ENCODE measurements at regions of chr2 and their contacts with region 1.

Region 1: GRCh38 chr2:225797394-225797793 is 397.9 kb downstream of the NYAP2 start:
- DNase-seq: no peak
- H3K4me3 ChIP-seq: no peak overlapping the region
- H3K27ac ChIP-seq: no peak overlapping the region
- H3K4me1 ChIP-seq: no peaks in the 10 kb centered on the region
- H3K27me3 ChIP-seq: no peaks in the 10 kb centered on the region
- CTCF ChIP-seq: peak; percentile 13 to 51 (median 13)

Region 2: GRCh38 chr2:225668606-225669266 is 128.7 kb before region 1 on chr2:
- intact Hi-C with region 1: loop called (anchors 2 kb)
- DNase-seq: no peak
- H3K4me3 ChIP-seq: no peak overlapping the region
- H3K27ac ChIP-seq: no peak overlapping the region
- H3K4me1 ChIP-seq: no peaks in the 10 kb centered on the region
- H3K27me3 ChIP-seq: no peaks in the 10 kb centered on the region
- CTCF ChIP-seq: peak; percentile 14 to 60 (median 46)

Region 3: DNA sequence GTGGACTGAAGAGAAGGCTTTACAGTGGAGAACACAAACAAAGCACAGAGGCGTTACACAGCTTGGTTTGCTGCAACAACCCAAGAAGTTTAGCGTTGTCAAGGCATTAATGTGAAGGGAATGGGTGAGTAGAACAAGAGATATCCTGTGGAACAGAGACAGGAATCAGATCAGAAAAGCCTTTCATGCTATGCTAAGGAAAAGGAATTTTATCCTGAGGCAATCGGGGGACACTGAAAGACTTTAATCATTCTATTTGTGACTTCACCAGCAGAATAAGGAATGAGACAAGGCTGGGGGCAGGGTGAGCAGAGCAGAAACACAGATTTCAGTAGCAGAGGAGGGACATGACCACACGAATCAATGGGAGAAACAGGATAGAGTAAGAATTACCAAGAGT is 401.6 kb after region 1 on chr2:
- intact Hi-C with region 1: no loop called
- DNase-seq: no peak
- H3K4me3 ChIP-seq: no peak overlapping the region
- H3K27ac ChIP-seq: no peak overlapping the region
- H3K4me1 ChIP-seq: no peaks in the 10 kb centered on the region
- H3K27me3 ChIP-seq: no peaks in the 10 kb centered on the region
- CTCF ChIP-seq: no peak